ENCODE measurements at regions of chr3 and their contacts with region 1.

Region 1: DNA sequence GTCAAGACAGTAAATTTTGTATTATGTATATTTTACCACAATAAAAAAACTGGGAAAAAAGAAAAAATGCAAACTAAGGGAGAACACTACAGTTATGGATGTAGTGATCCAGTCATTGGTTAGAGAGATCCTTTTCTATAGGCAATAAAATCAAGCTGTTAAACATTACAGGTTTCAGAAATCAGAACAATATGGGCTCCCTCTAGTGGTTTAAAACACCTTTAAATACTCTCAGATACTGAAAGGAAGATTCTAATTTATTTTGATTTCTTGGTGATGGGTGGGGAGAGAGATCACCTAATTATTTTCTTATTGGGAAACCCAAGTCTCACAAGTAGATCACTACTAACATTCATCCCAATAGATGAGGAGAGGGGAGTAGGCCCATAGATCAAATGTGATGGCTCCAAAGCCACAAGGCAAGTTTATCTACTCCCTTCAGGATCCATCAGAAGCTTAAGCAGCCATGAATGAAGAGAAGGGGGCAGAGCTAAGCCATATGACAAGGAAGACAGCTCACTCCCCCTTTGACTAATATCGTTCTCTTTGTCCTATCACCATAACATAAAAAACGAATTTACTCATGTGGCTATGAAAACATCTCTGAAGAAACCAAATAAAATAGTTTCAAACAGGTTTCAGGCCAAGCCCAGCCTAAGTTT is 118.6 kb downstream of the ANO10 start:
- DNase-seq: no peak
- H3K4me3 ChIP-seq: no peak overlapping the region
- H3K27ac ChIP-seq: no peak overlapping the region
- H3K4me1 ChIP-seq: no peaks in the 10 kb centered on the region
- H3K27me3 ChIP-seq: no peaks in the 10 kb centered on the region
- CTCF ChIP-seq: peak; percentile 20

Region 2: DNA sequence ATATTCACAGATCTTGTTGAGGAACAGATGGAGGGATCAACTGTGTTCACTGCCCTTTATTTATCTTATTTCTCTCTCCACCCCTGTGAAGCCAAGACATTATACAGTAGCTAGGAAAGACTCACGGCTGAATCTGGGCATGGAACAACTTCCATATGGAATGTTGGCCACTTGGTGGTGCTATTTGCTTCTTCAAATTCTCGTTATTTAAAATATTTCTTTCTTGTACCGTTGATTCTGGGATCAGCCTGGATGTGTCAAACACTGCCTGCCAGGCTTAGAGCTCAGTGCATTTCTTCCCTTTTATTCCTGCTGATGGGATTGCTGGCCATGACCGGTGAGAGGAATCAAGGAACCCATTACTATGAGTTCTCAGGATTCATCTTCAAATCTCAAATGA is 541.6 kb before region 1 on chr3:
- intact Hi-C with region 1: loop called (anchors 10 kb)
- DNase-seq: peak; percentile 26
- H3K4me3 ChIP-seq: no peak overlapping the region
- H3K27ac ChIP-seq: no peak overlapping the region
- H3K4me1 ChIP-seq: no peaks in the 10 kb centered on the region
- H3K27me3 ChIP-seq: no peaks in the 10 kb centered on the region
- CTCF ChIP-seq: peak; percentile 50

Region 3: GRCh38 chr3:43162230-43163084 is 340.7 kb before region 1 on chr3:
- intact Hi-C with region 1: loop called (anchors 5 kb)
- DNase-seq: no peak
- H3K4me3 ChIP-seq: no peak overlapping the region
- H3K27ac ChIP-seq: no peak overlapping the region
- H3K4me1 ChIP-seq: no peaks in the 10 kb centered on the region
- H3K27me3 ChIP-seq: no peaks in the 10 kb centered on the region
- CTCF ChIP-seq: peak; percentile 27

Region 4: DNA sequence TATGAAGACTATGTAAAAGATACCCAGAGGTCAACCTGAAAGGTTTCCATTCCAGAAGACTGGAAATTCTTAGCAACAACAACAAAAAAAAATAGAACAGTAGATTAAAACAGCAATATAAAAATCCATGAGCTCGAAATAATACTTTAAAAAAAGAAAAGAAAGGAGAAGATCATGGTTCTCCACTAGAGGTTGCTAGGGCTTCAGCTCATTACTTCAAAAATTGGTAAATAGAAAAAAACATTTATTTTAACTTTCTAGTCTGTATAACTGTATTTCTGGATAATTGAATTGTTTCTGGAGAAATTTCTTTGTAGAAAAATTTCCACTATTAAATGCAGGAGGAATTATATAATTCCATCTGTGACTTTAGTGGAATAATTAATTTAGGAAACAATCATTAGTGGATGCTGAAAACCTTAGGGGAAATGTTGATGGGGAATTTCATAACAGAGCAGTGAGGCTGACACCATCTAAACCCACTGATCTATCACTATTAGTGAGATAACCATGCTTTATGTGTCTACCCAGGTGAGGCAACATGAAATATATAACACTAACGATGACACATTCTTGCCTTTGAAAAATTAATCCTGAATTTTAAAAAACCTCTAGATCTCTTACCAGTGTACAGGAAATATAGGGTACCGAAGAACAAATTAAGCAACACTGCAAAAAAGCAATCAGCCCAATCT is 279.4 kb before region 1 on chr3:
- intact Hi-C with region 1: loop called (anchors 10 kb)
- DNase-seq: no peak
- H3K4me3 ChIP-seq: no peak overlapping the region
- H3K27ac ChIP-seq: no peak overlapping the region
- H3K4me1 ChIP-seq: no peaks in the 10 kb centered on the region
- H3K27me3 ChIP-seq: no peaks in the 10 kb centered on the region
- CTCF ChIP-seq: no peak

Measured in colonic mucosa (tissue), 4 donors.